HCT116 (cell line): ENCODE measurements at regions of chr7 and their contacts with region 1.

Region 1: GRCh38 chr7:105060437-105060836 is 46.4 kb downstream of the KMT2E start:
- DNase-seq: no peak
- ATAC-seq: no peak
- H3K4me3 ChIP-seq: no peak overlapping the region
- H3K27ac ChIP-seq: no peak overlapping the region
- H3K4me1 ChIP-seq: no peaks in the 10 kb centered on the region
- H3K27me3 ChIP-seq: no peaks in the 10 kb centered on the region
- CTCF ChIP-seq: no peak
- POLR2A ChIP-seq: no peak
- RAD21 ChIP-seq: no peak

Region 2: DNA sequence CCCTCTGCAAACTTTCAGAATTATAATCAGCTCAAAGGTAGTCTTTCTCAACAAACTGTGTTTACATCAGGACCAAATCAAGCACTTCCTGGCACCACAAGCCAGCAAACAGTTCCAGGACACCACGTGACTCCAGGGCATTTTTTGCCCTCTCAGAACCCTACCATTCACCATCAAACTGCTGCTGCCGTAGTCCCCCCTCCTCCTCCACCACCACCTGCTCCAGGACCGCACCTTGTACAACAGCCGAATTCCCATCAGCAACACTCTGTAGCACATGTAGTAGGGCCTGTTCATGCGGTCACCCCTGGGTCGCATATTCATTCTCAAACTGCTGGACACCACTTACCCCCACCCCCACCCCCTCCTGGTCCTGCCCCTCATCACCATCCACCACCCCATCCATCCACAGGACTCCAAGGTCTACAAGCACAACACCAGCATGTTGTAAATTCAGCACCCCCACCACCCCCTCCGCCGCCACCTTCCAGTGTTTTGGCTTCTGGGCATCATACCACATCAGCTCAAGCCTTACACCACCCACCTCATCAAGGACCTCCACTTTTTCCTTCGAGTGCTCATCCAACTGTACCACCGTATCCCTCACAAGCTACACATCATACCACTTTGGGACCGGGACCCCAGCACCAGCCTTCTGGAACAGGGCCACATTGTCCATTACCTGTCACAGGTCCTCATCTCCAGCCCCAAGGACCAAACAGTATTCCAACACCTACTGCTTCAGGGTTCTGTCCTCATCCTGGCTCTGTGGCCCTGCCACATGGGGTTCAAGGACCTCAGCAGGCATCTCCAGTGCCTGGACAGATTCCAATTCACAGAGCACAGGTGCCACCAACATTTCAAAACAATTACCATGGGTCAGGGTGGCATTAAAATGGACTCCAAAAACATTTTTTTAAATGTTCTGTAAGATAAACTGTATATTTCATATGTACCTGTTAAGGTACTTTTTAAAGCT is 52.3 kb after region 1 on chr7:
- CTCF ChIA-PET with region 1: no interaction called
- POLR2A ChIA-PET with region 1: no interaction called
- RAD21 ChIA-PET with region 1: no interaction called
- intact Hi-C with region 1: loop called (anchors 5 kb)
- DNase-seq: no peak
- ATAC-seq: peak; percentile 14; the same call in 1 of the 2 replicates
- H3K4me3 ChIP-seq: no peak overlapping the region
- H3K27ac ChIP-seq: no peak overlapping the region
- H3K4me1 ChIP-seq: no peaks in the 10 kb centered on the region
- H3K27me3 ChIP-seq: no peaks in the 10 kb centered on the region
- CTCF ChIP-seq: no peak
- POLR2A ChIP-seq: no peak
- RAD21 ChIP-seq: no peak